Activated CD8-positive, alpha-beta T cell treated with anti-CD3 and anti-CD28 coated beads for 36 hours (primary cell): ENCODE measurements at regions of chrX and their contacts with region 1.

Region 1: DNA sequence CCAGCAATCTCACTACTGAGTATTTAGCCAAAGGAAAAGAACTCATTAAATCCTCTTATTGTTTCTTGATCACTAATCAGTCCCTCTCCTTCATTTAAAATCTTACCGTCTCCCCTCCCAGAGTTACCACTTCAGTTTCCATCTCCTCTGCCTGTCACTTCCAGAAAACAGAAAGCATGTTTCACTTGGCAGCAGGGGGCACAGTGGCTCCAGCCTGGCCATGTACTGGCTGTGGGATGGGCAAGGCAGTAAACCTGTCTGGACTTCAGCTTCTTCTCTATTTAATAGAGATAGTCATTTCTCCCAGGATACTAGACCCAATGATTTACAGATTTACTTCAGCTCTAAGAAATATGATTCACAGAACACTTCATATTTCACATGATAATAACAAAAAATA is 63.2 kb downstream of the CD40LG start:
- DNase-seq: peak; percentile 41
- ATAC-seq: peak; percentile 32
- H3K4me3 Mint-ChIP-seq: no peak overlapping the region
- H3K27ac Mint-ChIP-seq: peak overlapping the region; percentile 91
- H3K4me1 Mint-ChIP-seq: peaks cover 61% of the 10 kb centered on the region
- H3K27me3 Mint-ChIP-seq: no peaks in the 10 kb centered on the region
- CTCF ChIP-seq: no peak

Region 2: DNA sequence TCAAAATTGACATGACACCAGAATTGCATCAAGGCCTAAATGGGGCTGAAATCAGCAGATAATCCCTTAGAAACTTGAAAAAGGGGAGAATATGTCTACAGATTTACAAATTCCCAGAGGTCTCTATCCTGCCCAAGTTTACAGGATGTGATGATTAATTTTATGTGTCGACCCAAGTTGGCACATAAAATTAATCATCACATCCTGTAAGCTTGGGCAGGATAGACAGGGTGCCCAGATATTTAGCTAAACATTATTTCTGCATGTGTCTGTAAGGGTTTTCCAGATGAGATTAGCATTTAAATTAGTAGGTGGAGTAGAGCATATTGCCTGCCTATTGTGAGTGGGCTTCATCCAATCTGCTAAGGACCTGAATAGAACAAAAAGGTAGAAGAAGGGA is 17.2 kb after region 1 on chrX:
- CTCF ChIA-PET with region 1: interaction called, 11 read pairs
- POLR2A ChIA-PET with region 1: interaction called, 3 read pairs
- intact Hi-C with region 1: no loop called
- DNase-seq: no peak
- ATAC-seq: no peak
- H3K4me3 Mint-ChIP-seq: no peak overlapping the region
- H3K27ac Mint-ChIP-seq: peak overlapping the region; percentile 88
- H3K4me1 Mint-ChIP-seq: peaks cover 48% of the 10 kb centered on the region
- H3K27me3 Mint-ChIP-seq: no peaks in the 10 kb centered on the region
- CTCF ChIP-seq: no peak

Region 3: GRCh38 chrX:136767104-136767941 is 56.2 kb after region 1 on chrX:
- CTCF ChIA-PET with region 1: interaction called, 4 read pairs
- POLR2A ChIA-PET with region 1: interaction called, 5 read pairs
- intact Hi-C with region 1: loop called (anchors 10 kb)
- DNase-seq: peak; percentile 59
- ATAC-seq: peak; percentile 43
- H3K4me3 Mint-ChIP-seq: peak overlapping the region; percentile 74
- H3K27ac Mint-ChIP-seq: peak overlapping the region; percentile 91
- H3K4me1 Mint-ChIP-seq: peaks cover 64% of the 10 kb centered on the region
- H3K27me3 Mint-ChIP-seq: no peaks in the 10 kb centered on the region
- CTCF ChIP-seq: no peak

Region 4: DNA sequence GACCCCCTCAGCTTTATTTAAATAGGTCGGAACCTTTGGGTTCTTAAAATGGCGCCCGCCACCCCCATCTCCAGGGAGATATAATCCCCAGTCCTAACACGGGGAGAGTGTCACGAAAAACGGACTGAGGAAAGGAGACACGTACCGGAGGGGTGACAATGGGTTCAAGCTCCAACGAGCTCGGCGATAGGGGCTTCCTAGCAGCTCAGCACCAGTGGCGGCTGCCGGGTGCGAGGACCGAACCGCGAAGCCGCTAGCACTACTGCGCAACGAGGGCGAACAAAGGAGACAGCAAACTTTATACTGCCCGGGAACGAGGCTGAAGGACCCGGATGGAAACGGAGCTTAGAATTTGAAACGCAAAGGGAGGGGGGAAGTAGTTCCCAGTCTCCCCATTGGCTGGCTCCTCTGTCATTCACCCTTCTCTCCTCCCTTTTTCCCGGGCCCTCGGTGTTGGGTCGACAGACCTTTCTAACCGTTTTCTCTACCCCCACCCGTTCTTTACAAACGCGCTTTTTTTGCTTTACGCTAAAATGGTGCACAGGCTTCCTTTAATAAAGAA is 169.4 kb after region 1 on chrX and contains the start of gene RBMX:
- CTCF ChIA-PET with region 1: no interaction called
- POLR2A ChIA-PET with region 1: interaction called, 4 read pairs
- intact Hi-C with region 1: loop called (anchors 10 kb)
- DNase-seq: peak; percentile 94
- ATAC-seq: peak; percentile 91
- H3K4me3 Mint-ChIP-seq: peak within 1 kb of the TSS; percentile 99
- H3K27ac Mint-ChIP-seq: peak within 1 kb of the TSS; percentile 100
- H3K4me1 Mint-ChIP-seq: peaks cover 21% of the 10 kb centered on the region
- H3K27me3 Mint-ChIP-seq: no peaks in the 10 kb centered on the region
- CTCF ChIP-seq: no peak
- total RNA-seq, gene RBMX: 285 TPM

Region 5: DNA sequence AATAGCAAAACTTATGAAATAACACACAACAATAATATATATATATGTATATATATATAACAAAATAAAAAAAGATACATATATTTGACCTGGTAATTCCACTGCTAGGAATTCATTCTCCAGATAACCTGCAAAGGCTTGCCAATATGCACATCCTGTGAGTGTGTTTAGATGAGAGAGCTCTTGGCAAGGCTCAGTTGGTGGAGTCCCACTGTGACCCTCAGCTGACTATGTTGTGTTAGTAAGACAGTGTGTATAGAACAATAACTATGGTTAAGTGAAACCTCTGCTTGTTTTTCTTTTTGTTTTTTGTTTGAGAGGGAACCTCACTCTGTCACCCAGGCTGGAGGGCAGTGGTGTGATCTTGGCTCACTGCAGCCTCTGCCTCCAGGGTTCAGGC is 208.9 kb after region 1 on chrX:
- CTCF ChIA-PET with region 1: interaction called, 4 read pairs
- POLR2A ChIA-PET with region 1: no interaction called
- intact Hi-C with region 1: loop called (anchors 5 kb)
- DNase-seq: no peak
- ATAC-seq: no peak
- H3K4me3 Mint-ChIP-seq: no peak overlapping the region
- H3K27ac Mint-ChIP-seq: no peak overlapping the region
- H3K4me1 Mint-ChIP-seq: peaks cover under 1% of the 10 kb centered on the region
- H3K27me3 Mint-ChIP-seq: no peaks in the 10 kb centered on the region
- CTCF ChIP-seq: no peak

Region 6: DNA sequence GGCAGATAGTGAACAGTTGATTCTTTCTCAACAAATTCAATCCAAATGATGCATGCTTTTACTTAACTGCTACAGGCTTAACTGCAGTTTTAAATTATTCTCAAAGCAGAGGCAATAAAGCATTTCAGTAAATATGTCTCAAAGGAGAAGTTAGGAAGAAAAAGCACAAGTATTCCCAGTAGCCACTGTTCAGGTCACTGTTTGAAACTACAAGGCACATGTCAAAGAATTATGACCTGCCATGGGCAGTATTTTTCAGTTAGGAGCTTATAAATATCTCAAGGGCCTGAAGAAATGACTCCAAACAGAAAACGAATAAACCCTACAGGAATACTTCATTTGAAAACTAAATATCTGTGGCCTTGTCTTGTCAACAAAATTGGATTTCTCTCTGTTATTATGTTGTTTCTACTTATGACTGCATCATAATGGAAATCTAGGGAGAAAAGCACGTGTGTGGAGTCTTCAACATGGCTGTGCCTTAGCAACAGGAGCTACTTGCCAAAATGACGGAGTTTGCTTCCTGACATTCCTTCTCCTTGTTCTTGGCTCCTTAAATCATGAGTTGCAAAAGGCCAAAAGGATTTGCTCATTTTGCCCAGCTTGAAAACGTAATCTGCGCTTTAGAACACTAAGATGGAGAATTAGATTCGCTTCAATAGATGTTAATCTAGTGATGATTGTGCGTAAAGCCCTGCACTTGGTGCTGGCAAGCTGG is 390.3 kb after region 1 on chrX:
- CTCF ChIA-PET with region 1: no interaction called
- POLR2A ChIA-PET with region 1: no interaction called
- intact Hi-C with region 1: no loop called
- DNase-seq: no peak
- ATAC-seq: no peak
- H3K4me3 Mint-ChIP-seq: no peak overlapping the region
- H3K27ac Mint-ChIP-seq: no peak overlapping the region
- H3K4me1 Mint-ChIP-seq: no peaks in the 10 kb centered on the region
- H3K27me3 Mint-ChIP-seq: peaks cover 3% of the 10 kb centered on the region
- CTCF ChIP-seq: no peak